Mucosa of descending colon (tissue), 3 donors: ENCODE measurements at regions of chr3 and their contacts with region 1.

Region 1: DNA sequence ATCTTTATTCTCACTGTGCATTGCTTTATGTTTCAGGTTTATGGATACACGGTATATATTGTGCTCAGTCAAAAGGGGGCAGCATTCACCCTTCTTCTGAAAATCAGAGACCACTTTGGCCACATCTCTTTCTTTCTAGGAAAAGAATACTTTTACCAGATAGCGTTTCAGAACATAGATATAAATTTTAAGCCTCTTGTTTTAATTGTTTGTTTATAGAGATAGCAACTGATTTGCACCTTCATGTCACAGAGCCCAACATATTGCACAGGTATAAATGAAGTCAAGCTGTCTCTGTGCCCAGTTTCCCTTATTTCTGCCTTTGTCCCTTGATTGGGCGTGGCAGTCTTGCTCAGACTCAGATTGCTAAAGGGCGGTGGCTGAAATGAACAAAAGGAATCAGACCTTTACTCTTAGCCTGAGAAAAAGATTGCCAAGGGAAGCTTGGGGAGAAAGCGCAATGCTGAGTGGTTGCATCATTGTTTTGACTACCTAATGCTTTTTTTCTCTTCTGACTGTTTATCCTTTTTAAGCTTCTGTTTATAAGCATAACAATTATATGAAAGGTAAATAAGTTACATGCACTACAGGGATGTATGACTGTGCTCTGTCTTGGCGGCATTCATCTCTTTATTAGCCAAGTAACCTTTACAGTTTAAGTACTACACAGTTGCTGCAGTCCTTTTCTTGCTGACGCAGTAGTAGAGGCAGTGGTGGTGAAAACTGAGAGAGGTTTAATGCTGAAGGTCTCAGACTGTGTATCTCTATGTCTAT is 70.8 kb upstream of the ZBTB20 start:
- DNase-seq: peak in 2 of 3 donors; percentile 32 to 73
- ATAC-seq: peak; percentile 96
- H3K4me3 ChIP-seq: no peak overlapping the region
- H3K4me1 ChIP-seq: peaks cover 10% of the 10 kb centered on the region
- CTCF ChIP-seq: no peak

Region 2: DNA sequence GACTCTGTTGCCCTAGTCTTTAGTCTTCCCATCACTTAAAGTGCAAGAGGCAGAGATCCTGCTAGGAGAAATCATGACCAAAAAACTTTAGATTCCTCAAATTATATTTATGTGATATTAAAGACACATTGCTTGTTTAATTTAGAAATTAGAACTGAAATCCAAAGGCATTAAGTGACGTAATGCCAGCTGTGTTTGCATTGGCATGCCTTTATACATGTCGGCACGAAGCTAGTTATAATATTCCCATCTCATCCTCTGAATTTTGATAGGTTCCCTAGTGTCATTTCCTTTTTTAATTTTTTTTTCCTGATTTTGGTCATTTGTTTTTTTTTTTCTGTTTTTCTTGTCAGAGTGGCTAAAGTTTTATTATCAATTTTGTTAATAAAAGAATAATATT is 132.7 kb after region 1 on chr3:
- intact Hi-C with region 1: no loop called
- DNase-seq: no peak
- ATAC-seq: no peak
- H3K4me3 ChIP-seq: no peak overlapping the region
- H3K4me1 ChIP-seq: no peaks in the 10 kb centered on the region
- CTCF ChIP-seq: no peak

Region 3: GRCh38 chr3:115692887-115693524 is 475.1 kb after region 1 on chr3:
- intact Hi-C with region 1: loop called (anchors 5 kb)
- DNase-seq: peak; percentile 51 to 89 (median 60)
- ATAC-seq: peak; percentile 96
- H3K4me3 ChIP-seq: no peak overlapping the region
- H3K4me1 ChIP-seq: no peaks in the 10 kb centered on the region
- CTCF ChIP-seq: peak; percentile 41